ENCODE measurements at regions of chr3 and their contacts with region 1.

Region 1: DNA sequence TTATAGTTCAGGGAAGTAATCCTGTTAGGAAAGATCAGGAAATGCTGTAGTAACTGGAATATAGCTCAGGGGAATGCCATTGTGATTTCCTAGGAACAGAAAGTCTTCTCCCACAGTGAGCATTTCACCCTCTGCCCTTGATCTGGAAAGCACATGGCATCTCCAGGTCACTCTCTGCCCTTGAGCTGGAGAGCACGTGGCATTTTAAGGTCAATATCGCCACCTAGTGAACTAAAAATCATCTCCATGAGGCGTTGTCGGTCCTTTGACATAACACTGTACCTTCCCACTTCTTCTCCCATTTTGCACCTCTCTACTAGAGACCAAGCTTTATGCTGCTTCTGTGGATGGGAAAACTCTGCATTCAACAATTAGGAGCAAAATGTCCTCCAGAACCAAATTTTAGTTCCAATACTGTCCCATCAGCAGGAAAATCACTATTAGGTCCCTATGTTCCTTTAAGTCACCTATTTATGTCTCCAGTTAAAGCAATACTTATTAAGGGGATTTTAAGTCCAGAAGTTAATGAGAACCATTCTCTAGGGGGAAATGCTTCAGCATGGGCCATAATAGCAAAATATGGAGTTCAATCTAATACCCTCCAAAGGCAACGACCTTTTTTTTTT is 54.7 kb upstream of the GK5 start:
- DNase-seq: peak; percentile 57
- ATAC-seq: peak; percentile 92
- H3K4me3 Mint-ChIP-seq: no peak overlapping the region
- H3K27ac Mint-ChIP-seq: peak overlapping the region; percentile 38
- H3K4me1 Mint-ChIP-seq: peaks cover 3% of the 10 kb centered on the region
- H3K27me3 Mint-ChIP-seq: no peaks in the 10 kb centered on the region
- CTCF ChIP-seq: peak; percentile 69

Region 2: GRCh38 chr3:141853081-141853601 is 426.9 kb before region 1 on chr3:
- CTCF ChIA-PET with region 1: no interaction called
- POLR2A ChIA-PET with region 1: no interaction called
- intact Hi-C with region 1: no loop called
- DNase-seq: no peak
- ATAC-seq: no peak
- H3K4me3 Mint-ChIP-seq: no peak overlapping the region
- H3K27ac Mint-ChIP-seq: no peak overlapping the region
- H3K4me1 Mint-ChIP-seq: no peaks in the 10 kb centered on the region
- H3K27me3 Mint-ChIP-seq: peaks cover 3% of the 10 kb centered on the region
- CTCF ChIP-seq: no peak

Region 3: DNA sequence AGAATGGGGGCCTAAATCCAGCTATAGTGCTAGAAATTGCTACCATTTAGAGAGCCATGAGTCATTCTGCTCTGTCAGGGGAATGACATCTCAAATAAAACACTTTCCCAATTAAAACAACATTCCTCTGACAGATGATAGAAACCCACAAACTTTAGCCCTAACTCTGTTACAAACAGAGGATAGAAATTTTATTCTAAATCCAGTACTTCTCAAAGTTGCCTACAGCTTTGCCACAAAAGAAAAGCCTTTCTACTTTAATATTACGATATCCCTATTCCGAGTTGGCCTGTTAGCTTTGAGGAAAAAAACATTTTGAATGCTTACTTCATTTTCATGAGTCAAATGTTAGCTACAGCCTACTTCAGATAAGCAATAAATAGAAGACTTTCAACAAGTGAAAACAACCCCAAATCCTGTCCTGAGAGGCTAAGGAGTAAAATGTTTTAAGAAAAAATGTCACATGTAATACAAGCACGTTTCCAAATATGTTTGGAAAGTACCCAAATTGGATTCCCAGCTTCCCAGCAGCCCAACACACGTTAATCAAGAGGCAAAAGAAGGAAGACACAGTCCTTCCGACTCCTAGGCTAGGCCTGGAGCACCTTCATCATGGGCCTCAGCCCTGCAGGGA is 320.0 kb before region 1 on chr3:
- CTCF ChIA-PET with region 1: interaction called, 8 read pairs
- POLR2A ChIA-PET with region 1: no interaction called
- intact Hi-C with region 1: loop called (anchors 5 kb)
- DNase-seq: no peak
- ATAC-seq: no peak
- H3K4me3 Mint-ChIP-seq: no peak overlapping the region
- H3K27ac Mint-ChIP-seq: no peak overlapping the region
- H3K4me1 Mint-ChIP-seq: peaks cover 4% of the 10 kb centered on the region
- H3K27me3 Mint-ChIP-seq: no peaks in the 10 kb centered on the region
- CTCF ChIP-seq: no peak

Region 4: GRCh38 chr3:142022381-142022780 is 257.7 kb before region 1 on chr3:
- CTCF ChIA-PET with region 1: no interaction called
- POLR2A ChIA-PET with region 1: no interaction called
- intact Hi-C with region 1: loop called (anchors 5 kb)
- DNase-seq: peak; percentile 28
- ATAC-seq: peak; percentile 75
- H3K4me3 Mint-ChIP-seq: no peak overlapping the region
- H3K27ac Mint-ChIP-seq: no peak overlapping the region
- H3K4me1 Mint-ChIP-seq: peaks cover 30% of the 10 kb centered on the region
- H3K27me3 Mint-ChIP-seq: no peaks in the 10 kb centered on the region
- CTCF ChIP-seq: no peak

Region 5: GRCh38 chr3:142129516-142130171 is 150.4 kb before region 1 on chr3:
- CTCF ChIA-PET with region 1: interaction called, 26 read pairs
- POLR2A ChIA-PET with region 1: no interaction called
- intact Hi-C with region 1: loop called (anchors 5 kb)
- DNase-seq: no peak
- ATAC-seq: no peak
- H3K4me3 Mint-ChIP-seq: no peak overlapping the region
- H3K27ac Mint-ChIP-seq: no peak overlapping the region
- H3K4me1 Mint-ChIP-seq: no peaks in the 10 kb centered on the region
- H3K27me3 Mint-ChIP-seq: no peaks in the 10 kb centered on the region
- CTCF ChIP-seq: no peak

Region 6: DNA sequence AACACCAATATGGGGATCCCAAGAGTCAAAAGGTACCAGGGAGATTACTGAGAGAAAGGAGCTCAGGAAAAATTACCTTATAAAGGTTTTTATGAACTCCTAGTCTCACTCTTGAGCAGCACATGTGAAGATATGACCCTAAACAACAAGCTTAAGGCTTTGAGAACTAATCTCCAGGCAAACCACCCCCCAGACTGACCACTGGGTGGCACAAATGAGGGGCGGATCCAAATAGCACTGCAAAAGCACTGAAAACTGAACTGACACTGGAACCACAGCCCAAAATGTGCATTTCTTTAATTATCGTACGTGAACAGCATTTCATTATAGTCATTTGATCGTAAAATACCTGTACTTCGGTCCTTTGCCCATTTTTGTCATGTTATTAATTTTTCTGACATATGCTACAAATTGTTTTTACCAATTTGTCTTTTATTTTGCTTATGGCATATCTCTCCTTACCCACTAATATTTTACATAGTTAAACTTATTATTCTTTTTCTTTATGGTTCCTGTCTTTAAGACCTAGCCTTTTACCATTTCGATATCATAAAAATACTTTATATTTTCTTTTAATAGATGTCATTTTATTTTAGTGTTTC is 99.2 kb before region 1 on chr3:
- CTCF ChIA-PET with region 1: interaction called, 12 read pairs
- POLR2A ChIA-PET with region 1: no interaction called
- intact Hi-C with region 1: no loop called
- DNase-seq: peak; percentile 43
- ATAC-seq: no peak
- H3K4me3 Mint-ChIP-seq: no peak overlapping the region
- H3K27ac Mint-ChIP-seq: no peak overlapping the region
- H3K4me1 Mint-ChIP-seq: no peaks in the 10 kb centered on the region
- H3K27me3 Mint-ChIP-seq: no peaks in the 10 kb centered on the region
- CTCF ChIP-seq: peak; percentile 27

Region 7: DNA sequence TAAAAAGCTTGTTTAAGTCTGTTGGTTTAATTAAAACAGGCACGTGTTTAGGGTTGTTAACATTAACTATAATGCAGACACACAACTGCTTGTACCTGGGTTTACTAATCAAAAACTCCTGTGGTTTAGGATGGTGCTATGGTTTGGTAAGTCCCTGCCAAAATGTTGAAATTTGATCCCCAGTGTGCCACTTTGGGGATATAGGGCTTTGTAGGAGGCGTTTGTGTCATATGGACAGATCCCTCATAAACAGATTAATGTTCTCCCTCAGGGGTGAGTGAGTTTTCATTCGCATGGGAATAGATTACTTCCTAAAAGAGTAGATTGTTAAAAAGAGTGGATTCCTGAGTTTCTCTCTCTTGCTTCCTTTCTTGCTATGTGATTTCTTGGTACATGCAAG is 36.0 kb before region 1 on chr3:
- CTCF ChIA-PET with region 1: no interaction called
- POLR2A ChIA-PET with region 1: no interaction called
- intact Hi-C with region 1: no loop called
- DNase-seq: no peak
- ATAC-seq: no peak
- H3K4me3 Mint-ChIP-seq: no peak overlapping the region
- H3K27ac Mint-ChIP-seq: no peak overlapping the region
- H3K4me1 Mint-ChIP-seq: no peaks in the 10 kb centered on the region
- H3K27me3 Mint-ChIP-seq: peaks cover 9% of the 10 kb centered on the region
- CTCF ChIP-seq: no peak

Region 8: DNA sequence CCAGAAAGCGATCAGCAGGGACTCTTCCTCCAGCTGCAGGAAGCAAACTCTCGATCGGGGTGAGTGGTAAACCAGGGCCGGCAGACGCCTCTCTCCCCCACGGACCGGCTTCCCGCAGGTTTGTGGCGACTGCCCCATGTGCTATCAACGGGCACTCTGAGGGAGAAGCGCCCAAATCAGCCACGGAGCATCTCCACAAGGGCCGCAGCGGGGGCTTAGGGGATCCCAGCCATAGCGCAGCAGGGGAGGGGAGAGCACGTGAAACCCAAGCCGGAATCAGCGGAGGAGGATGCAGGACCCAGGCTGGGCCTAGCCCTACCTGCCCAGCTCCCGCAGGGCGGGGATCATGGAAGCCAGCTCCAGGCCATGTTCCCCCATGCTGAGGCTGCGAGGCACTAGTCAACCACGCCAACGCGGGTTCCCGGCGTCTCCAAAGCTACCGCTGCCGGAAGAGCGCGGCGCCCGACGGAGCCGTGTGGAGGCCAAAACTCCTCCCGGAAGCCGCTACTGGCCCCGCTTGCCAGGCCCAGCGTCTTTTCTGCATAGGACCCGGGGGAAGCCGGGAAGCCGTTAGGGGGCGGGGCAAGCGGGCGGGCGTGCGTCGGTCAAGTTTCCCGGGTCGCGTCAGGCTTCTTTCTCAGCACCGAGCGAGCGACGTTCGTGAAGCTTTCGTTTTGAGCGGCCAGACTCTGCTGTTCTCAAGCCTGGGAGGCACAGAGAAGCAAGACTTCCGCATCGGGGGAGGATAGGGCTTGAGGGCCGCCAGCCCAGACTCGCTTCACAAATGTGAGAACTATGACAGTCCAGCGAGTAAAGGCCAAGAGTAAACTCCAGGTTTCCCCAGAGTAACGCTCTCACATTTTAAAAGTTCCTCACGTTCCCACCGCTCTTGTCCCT is 298.5 kb after region 1 on chr3 and contains the start of gene ATR:
- CTCF ChIA-PET with region 1: no interaction called
- POLR2A ChIA-PET with region 1: no interaction called
- intact Hi-C with region 1: no loop called
- DNase-seq: peak; percentile 98
- ATAC-seq: peak; percentile 96
- H3K4me3 Mint-ChIP-seq: peak within 1 kb of the TSS; percentile 98
- H3K27ac Mint-ChIP-seq: peak within 1 kb of the TSS; percentile 95
- H3K4me1 Mint-ChIP-seq: peaks cover 43% of the 10 kb centered on the region
- H3K27me3 Mint-ChIP-seq: no peaks in the 10 kb centered on the region
- CTCF ChIP-seq: no peak
- total RNA-seq, gene ATR: 34.2 to 39.0 TPM

Measured in activated CD8-positive, alpha-beta T cell treated with anti-CD3 and anti-CD28 coated beads for 36 hours (primary cell).